Tibial artery (tissue), 4 donors: ENCODE measurements at regions of chr6 and their contacts with region 1.

Region 1: GRCh38 chr6:10626154-10626741 is 68.2 kb downstream of the C6orf52 start:
- DNase-seq: no peak
- H3K4me3 ChIP-seq: no peak overlapping the region
- H3K27ac ChIP-seq: no peak overlapping the region
- H3K4me1 ChIP-seq: no peaks in the 10 kb centered on the region
- H3K27me3 ChIP-seq: no peaks in the 10 kb centered on the region
- CTCF ChIP-seq: no peak

Region 2: GRCh38 chr6:10561611-10562199 is 64.5 kb before region 1 on chr6:
- intact Hi-C with region 1: loop called (anchors 2 kb)
- DNase-seq: no peak
- H3K4me3 ChIP-seq: no peak overlapping the region
- H3K27ac ChIP-seq: no peak overlapping the region
- H3K4me1 ChIP-seq: peaks cover 0 to 8% (median 0%) of the 10 kb centered on the region in 4 donors
- H3K27me3 ChIP-seq: peaks cover 0 to 15% of the 10 kb centered on the region in 2 donors
- CTCF ChIP-seq: no peak